ENCODE measurements at regions of chr5 and their contacts with region 1.

Region 1: DNA sequence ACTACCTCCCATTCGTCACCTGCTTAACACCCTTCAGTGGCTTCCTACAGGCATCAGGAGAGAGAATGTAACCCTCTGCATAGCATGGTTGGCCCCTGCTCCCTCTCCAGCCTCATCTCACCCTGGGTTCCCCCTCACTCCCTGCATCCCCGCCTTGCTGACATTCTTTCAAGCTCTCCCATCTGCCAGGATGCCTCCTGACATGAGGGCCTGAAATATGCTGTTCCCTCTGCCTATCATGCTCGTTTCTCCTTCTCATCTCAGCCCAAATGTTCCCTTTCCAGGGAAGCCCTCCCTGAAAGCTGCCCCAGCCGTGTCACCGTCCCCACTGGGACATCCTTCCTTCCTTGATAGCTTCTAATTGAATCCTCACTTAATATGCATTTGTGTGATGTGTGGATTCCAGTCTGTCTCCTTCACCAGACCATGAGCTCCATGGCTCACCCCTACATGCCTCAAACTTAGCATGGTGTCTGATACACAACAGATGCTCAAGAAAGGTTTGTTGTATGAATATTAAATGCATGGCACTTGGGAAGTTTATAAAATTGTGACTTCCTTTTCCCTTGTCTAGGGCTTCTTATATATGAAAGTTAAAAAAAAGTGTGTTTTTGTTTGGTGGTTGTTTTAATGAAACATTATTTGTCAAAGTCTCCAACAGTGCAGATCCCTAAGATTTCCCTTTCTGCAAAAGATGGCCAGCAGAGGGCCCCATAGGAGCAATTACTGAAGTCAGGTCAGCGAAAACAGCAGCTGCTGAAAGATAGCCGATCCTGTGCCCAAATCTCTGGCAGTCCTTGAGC is 7.3 kb upstream of the C5orf58 start:
- DNase-seq: peak; percentile 86
- ATAC-seq: peak; percentile 68
- H3K4me3 Mint-ChIP-seq: no peak overlapping the region
- H3K27ac Mint-ChIP-seq: no peak overlapping the region
- H3K4me1 Mint-ChIP-seq: peaks cover 4% of the 10 kb centered on the region
- H3K27me3 Mint-ChIP-seq: no peaks in the 10 kb centered on the region

Region 2: GRCh38 chr5:170087168-170087817 is 138.2 kb before region 1 on chr5:
- CTCF ChIA-PET with region 1: no interaction called
- POLR2A ChIA-PET with region 1: no interaction called
- DNase-seq: no peak
- ATAC-seq: no peak
- H3K4me3 Mint-ChIP-seq: no peak overlapping the region
- H3K27ac Mint-ChIP-seq: no peak overlapping the region
- H3K4me1 Mint-ChIP-seq: no peaks in the 10 kb centered on the region
- H3K27me3 Mint-ChIP-seq: no peaks in the 10 kb centered on the region

Region 3: DNA sequence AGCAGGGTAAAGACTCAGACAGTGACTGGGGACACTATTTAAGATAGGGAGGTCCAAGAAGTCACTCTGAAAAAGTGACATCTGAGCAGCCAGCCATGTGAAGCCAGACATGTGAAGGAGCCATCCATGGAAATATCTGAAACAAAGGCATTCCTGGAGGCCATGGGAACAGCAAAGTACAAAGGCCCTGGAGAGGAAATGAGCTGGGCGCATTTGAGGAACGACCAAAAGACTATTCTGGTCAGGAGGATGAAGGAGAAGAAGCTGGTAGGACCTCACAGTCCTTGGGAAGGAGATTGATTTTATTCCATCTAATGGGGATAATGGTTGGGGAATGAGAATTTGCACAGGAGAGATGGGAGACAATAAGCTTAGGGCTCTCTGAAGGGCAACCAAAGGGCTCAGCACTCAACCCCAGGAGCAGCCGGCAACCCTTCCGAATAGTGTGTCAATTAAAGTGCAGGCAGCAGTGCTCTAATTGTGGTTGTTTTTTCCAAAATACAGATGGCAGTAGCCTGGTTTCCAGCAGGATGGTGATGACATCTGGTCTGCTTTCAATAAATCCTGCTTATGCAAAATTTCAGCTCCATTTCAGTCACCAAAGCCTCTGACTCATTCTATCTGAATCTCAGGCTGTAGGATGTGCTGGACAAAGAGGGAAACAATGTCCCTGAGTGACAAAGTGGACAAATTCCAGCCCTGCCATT is 93.1 kb before region 1 on chr5:
- CTCF ChIA-PET with region 1: no interaction called
- POLR2A ChIA-PET with region 1: no interaction called
- DNase-seq: no peak
- ATAC-seq: no peak
- H3K4me3 Mint-ChIP-seq: no peak overlapping the region
- H3K27ac Mint-ChIP-seq: no peak overlapping the region
- H3K4me1 Mint-ChIP-seq: no peaks in the 10 kb centered on the region
- H3K27me3 Mint-ChIP-seq: peaks cover 41% of the 10 kb centered on the region

Region 4: GRCh38 chr5:170151097-170151831 is 74.3 kb before region 1 on chr5:
- CTCF ChIA-PET with region 1: no interaction called
- POLR2A ChIA-PET with region 1: no interaction called
- DNase-seq: no peak
- ATAC-seq: no peak
- H3K4me3 Mint-ChIP-seq: no peak overlapping the region
- H3K27ac Mint-ChIP-seq: no peak overlapping the region
- H3K4me1 Mint-ChIP-seq: no peaks in the 10 kb centered on the region
- H3K27me3 Mint-ChIP-seq: peaks cover 2% of the 10 kb centered on the region

Region 5: DNA sequence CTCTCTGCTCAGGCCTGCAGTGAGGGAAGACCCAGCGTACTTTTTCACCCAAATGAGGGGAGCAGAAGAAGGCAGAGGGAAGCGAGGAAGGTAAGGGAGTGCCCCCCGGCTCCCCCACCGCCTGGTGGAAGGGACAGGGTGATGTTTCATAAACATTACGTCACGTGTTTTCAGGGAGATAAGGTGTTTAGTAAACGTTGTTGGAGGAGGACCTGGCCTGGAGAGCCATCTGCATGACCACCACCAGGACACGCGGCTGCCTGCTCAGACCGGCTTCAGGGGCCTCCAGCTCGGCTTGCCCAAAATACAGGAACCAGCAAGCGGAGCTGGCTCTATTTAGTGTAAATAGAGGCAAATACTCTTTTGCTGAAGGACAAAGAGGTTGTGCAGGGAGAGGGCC is 32.7 kb before region 1 on chr5:
- CTCF ChIA-PET with region 1: no interaction called
- POLR2A ChIA-PET with region 1: no interaction called
- DNase-seq: no peak
- ATAC-seq: no peak
- H3K4me3 Mint-ChIP-seq: no peak overlapping the region
- H3K27ac Mint-ChIP-seq: no peak overlapping the region
- H3K4me1 Mint-ChIP-seq: no peaks in the 10 kb centered on the region
- H3K27me3 Mint-ChIP-seq: peaks cover 3% of the 10 kb centered on the region

Region 6: DNA sequence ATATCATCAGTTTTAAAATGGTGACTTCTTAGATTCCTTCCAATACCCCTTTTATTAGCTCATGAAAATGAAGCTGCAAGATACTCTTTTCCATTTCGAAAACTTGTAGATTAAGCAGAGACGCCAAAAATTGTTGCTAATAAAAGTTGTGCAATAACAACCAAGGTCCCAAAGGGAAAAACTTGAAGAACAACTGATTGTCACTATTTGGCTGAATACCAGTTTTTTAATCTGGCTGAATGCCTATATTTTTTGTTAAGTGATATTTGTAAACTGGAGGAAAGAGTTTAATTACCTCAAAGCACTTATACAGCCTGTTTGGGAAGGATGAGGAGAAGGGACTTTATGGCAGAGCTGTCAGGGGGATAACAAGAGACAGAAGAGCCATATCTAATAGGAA is 21.8 kb after region 1 on chr5:
- CTCF ChIA-PET with region 1: interaction called, 18 read pairs
- POLR2A ChIA-PET with region 1: no interaction called
- DNase-seq: no peak
- ATAC-seq: no peak
- H3K4me3 Mint-ChIP-seq: no peak overlapping the region
- H3K27ac Mint-ChIP-seq: no peak overlapping the region
- H3K4me1 Mint-ChIP-seq: peaks cover 30% of the 10 kb centered on the region
- H3K27me3 Mint-ChIP-seq: no peaks in the 10 kb centered on the region

Region 7: GRCh38 chr5:170267431-170268152 is 42.1 kb after region 1 on chr5:
- CTCF ChIA-PET with region 1: interaction called, 55 read pairs
- POLR2A ChIA-PET with region 1: interaction called, 3 read pairs
- DNase-seq: peak; percentile 89
- ATAC-seq: peak; percentile 59
- H3K4me3 Mint-ChIP-seq: peak overlapping the region; percentile 62
- H3K27ac Mint-ChIP-seq: peak overlapping the region; percentile 90
- H3K4me1 Mint-ChIP-seq: peaks cover 97% of the 10 kb centered on the region
- H3K27me3 Mint-ChIP-seq: no peaks in the 10 kb centered on the region

Region 8: GRCh38 chr5:170293273-170293672 is 67.7 kb after region 1 on chr5:
- CTCF ChIA-PET with region 1: interaction called, 25 read pairs
- POLR2A ChIA-PET with region 1: interaction called, 4 read pairs
- DNase-seq: peak; percentile 92
- ATAC-seq: peak; percentile 61
- H3K4me3 Mint-ChIP-seq: peak overlapping the region; percentile 96
- H3K27ac Mint-ChIP-seq: peak overlapping the region; percentile 93
- H3K4me1 Mint-ChIP-seq: peaks cover 64% of the 10 kb centered on the region
- H3K27me3 Mint-ChIP-seq: no peaks in the 10 kb centered on the region

Region 9: DNA sequence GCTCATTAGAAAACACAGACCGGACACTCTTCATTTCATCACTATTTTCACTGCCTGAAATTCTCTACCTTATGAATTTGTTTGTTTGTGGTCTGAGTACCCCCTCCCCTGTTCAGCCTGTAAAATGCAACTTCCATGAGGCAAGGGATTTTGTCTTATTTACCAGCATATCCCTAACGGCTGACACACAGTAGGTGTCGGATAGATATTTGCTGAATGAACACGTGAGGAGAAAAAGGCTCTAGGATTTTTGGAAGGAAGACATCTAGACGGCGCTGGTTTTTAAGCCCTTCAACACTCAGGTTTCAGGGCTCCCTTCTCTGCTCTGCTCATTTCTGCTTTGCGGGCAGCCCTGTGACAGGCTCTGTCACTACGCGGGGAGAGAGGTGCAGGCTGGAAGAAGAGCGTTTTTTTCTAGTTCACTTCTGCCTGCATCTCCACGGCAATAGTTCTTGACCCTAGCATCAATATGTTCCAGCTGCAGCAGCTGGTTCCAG is 122.7 kb after region 1 on chr5:
- CTCF ChIA-PET with region 1: interaction called, 29 read pairs
- POLR2A ChIA-PET with region 1: no interaction called
- DNase-seq: no peak
- ATAC-seq: no peak
- H3K4me3 Mint-ChIP-seq: no peak overlapping the region
- H3K27ac Mint-ChIP-seq: no peak overlapping the region
- H3K4me1 Mint-ChIP-seq: peaks cover 13% of the 10 kb centered on the region
- H3K27me3 Mint-ChIP-seq: peaks cover 47% of the 10 kb centered on the region